ENCODE measurements at regions of chr20 and their contacts with region 1.

Region 1: GRCh38 chr20:37384683-37385174 is 38.8 kb downstream of the SRC start:
- DNase-seq: peak in 1 of 2 donors; percentile 83
- H3K4me3 ChIP-seq: peak overlapping the region; percentile 51 to 70
- H3K27ac ChIP-seq: peak overlapping the region in 1 of 2 donors; percentile 9
- H3K4me1 ChIP-seq: peaks cover 3 to 12% of the 10 kb centered on the region in 2 donors
- H3K27me3 ChIP-seq: no peaks in the 10 kb centered on the region
- CTCF ChIP-seq: peak; percentile 90 to 95 (median 95)

Region 2: GRCh38 chr20:36957875-36958667 is 426.7 kb before region 1 on chr20:
- intact Hi-C with region 1: no loop called
- DNase-seq: no peak
- H3K4me3 ChIP-seq: no peak overlapping the region
- H3K27ac ChIP-seq: no peak overlapping the region
- H3K4me1 ChIP-seq: no peaks in the 10 kb centered on the region
- H3K27me3 ChIP-seq: no peaks in the 10 kb centered on the region
- CTCF ChIP-seq: no peak

Region 3: GRCh38 chr20:37192137-37192854 is 192.4 kb before region 1 on chr20:
- intact Hi-C with region 1: loop called (anchors 10 kb)
- DNase-seq: peak; percentile 41 to 93
- H3K4me3 ChIP-seq: no peak overlapping the region
- H3K27ac ChIP-seq: no peak overlapping the region
- H3K4me1 ChIP-seq: peaks cover 0 to 8% of the 10 kb centered on the region in 2 donors
- H3K27me3 ChIP-seq: no peaks in the 10 kb centered on the region
- CTCF ChIP-seq: peak; percentile 76 to 90 (median 88)

Region 4: GRCh38 chr20:37276494-37277252 is 108.1 kb before region 1 on chr20:
- intact Hi-C with region 1: loop called (anchors 1 kb)
- DNase-seq: peak in 1 of 2 donors; percentile 77
- H3K4me3 ChIP-seq: no peak overlapping the region
- H3K27ac ChIP-seq: no peak overlapping the region
- H3K4me1 ChIP-seq: peaks cover 0 to 7% of the 10 kb centered on the region in 2 donors
- H3K27me3 ChIP-seq: no peaks in the 10 kb centered on the region
- CTCF ChIP-seq: peak; percentile 14 to 71 (median 59)

Region 5: GRCh38 chr20:37345339-37346230 is 39.1 kb before region 1 on chr20 and contains the start of gene SRC:
- intact Hi-C with region 1: loop called (anchors 2 kb)
- DNase-seq: peak in 1 of 2 donors; percentile 90
- H3K4me3 ChIP-seq: peak within 1 kb of the TSS; percentile 83 to 94
- H3K27ac ChIP-seq: peak within 1 kb of the TSS; percentile 95 to 97
- H3K4me1 ChIP-seq: peaks cover 13 to 39% of the 10 kb centered on the region in 2 donors
- H3K27me3 ChIP-seq: no peaks in the 10 kb centered on the region
- CTCF ChIP-seq: no peak
- total RNA-seq, gene SRC: 67.4 TPM

Region 6: GRCh38 chr20:37356387-37356786 is 28.3 kb before region 1 on chr20:
- intact Hi-C with region 1: loop called (anchors 2 kb)
- DNase-seq: peak; percentile 57 to 93
- H3K4me3 ChIP-seq: peak overlapping the region in 1 of 2 donors; percentile 4
- H3K27ac ChIP-seq: peak overlapping the region; percentile 73 to 88
- H3K4me1 ChIP-seq: peaks cover 9 to 55% of the 10 kb centered on the region in 2 donors
- H3K27me3 ChIP-seq: no peaks in the 10 kb centered on the region
- CTCF ChIP-seq: peak in 1 of 3 experiments; percentile 4

Region 7: DNA sequence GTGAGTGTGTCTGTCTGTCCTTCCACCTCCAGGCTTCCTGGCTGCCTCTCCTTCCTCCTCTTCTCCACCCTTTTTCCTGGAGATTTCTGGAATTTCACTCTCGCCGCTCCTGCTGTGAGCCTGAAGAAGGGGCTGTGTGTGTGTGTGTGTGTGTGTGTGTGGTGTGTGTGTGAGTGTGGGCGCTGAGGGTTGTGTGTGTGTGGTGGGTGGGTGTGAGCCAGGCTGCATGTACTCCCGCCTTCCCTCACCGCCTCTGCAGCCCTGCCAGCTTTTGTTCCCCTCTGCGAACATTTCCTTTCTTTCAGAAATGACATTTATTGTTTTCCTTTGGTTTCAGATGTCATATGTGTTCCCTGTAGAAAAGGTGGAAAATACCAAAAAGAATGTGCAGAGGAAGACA is 37.3 kb after region 1 on chr20:
- intact Hi-C with region 1: no loop called
- DNase-seq: no peak
- H3K4me3 ChIP-seq: no peak overlapping the region
- H3K27ac ChIP-seq: no peak overlapping the region
- H3K4me1 ChIP-seq: no peaks in the 10 kb centered on the region
- H3K27me3 ChIP-seq: no peaks in the 10 kb centered on the region
- CTCF ChIP-seq: no peak

Region 8: DNA sequence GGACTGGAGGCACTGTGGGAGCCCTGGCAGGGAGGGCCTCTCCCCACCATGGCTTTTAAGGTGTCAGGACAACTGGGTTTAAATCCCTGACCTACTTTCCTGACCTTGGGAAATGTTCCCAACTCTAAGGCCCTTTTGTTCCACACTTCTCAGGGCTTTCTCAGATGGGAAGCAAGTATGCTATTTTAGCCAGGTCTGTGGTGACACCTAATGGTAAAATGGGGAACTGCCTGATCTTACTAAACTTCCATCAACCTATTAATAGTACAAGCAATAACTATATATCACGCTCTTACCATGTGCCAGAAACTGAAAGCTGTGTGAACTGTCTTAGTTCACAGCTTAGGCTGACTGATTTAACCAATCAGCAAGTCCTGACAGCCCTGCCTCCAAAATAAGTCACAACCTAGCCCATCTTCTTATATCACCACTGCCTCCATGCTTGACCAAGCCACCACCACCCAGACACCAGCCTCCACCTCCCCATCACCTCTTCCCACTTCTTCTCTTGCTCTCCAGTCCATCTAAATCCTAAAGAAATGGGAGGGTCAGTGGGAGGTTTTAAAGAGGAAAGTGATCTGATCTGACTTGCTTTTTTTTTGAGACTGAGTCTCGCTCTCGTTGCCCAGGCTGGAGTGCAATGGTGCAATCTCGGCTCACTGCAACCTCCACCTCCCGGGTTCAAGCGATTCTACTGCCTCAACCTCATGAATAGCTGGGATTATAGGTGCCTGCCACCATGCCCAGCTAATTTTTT is 149.8 kb after region 1 on chr20:
- intact Hi-C with region 1: loop called (anchors 5 kb)
- DNase-seq: peak in 1 of 2 donors; percentile 70
- H3K4me3 ChIP-seq: no peak overlapping the region
- H3K27ac ChIP-seq: no peak overlapping the region
- H3K4me1 ChIP-seq: no peaks in the 10 kb centered on the region
- H3K27me3 ChIP-seq: no peaks in the 10 kb centered on the region
- CTCF ChIP-seq: peak; percentile 80 to 86 (median 84)

Region 9: DNA sequence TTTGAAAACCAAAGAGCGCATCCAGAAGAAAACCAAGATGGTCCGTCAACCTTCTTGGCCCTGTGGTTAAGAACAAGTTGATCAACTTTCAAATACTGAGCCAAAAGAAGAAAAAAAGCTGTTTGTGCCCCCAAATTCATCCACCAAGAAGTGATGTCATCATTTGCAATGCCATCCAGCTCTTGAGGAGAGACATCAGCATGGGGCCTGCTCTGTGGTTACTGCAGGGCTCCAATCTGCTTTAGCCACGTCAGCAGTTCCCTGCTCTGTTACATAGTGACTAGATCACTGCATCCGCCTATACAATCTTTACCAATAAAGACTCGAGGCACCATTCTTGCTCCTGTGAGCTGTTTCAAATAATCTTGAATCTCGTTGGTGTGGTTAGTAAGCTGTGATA is 217.9 kb after region 1 on chr20:
- intact Hi-C with region 1: no loop called
- DNase-seq: no peak
- H3K4me3 ChIP-seq: no peak overlapping the region
- H3K27ac ChIP-seq: no peak overlapping the region
- H3K4me1 ChIP-seq: no peaks in the 10 kb centered on the region
- H3K27me3 ChIP-seq: no peaks in the 10 kb centered on the region
- CTCF ChIP-seq: no peak

Measured in ascending aorta (tissue), 2 donors.